ENCODE measurements at regions of chr6 and their contacts with region 1.

Region 1: GRCh38 chr6:42864602-42865001 is 14.8 kb upstream of the RPL7L1 start:
- DNase-seq: no peak
- H3K4me3 ChIP-seq: no peak overlapping the region
- CTCF ChIP-seq: no peak

Region 2: GRCh38 chr6:42661540-42662153 is 203.0 kb before region 1 on chr6:
- in situ Hi-C with region 1: loop called (anchors 25 kb)
- DNase-seq: peak; percentile 45
- H3K4me3 ChIP-seq: no peak overlapping the region
- CTCF ChIP-seq: peak; percentile 82

Region 3: DNA sequence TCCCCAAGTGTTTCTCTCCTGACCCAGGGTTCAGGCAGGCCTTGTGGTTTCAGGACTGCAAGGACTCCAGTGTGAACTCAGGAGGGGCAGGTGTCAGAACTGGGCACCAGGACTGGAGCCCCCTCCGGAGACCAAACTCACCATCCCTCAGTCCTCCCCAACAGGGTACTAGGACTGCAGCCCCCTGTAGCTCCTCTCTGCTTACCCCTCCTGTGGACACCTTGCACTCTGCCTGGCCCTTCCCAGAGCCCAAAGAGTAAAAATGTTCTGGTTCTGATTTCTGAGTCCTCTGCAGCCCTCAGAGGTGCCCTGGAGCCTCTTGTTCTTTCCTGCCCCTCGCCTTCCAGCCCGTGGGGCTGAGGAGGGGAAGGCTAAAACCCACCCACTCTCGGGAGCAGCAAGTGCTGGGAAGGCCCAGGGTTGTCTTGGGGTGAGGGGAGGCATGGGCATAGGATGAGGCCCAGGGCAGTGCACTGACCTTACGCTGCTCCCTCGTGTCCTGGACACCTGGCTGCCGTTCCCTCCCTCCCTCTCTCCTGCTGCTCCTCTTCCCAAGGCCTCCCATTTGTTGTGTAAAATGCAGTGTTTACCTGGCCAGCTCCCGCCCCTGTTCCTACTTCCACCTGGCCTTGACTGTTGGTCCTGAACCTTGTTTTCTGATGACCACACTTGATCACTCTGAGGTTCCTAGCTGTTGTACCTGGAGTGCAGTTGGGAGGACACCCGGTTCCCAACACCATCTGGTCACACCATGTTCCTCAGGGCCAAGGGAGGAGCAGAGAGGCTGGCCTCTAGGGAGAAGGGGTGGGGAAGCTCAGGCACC is 74.6 kb after region 1 on chr6:
- in situ Hi-C with region 1: no loop called
- DNase-seq: no peak
- H3K4me3 ChIP-seq: no peak overlapping the region
- CTCF ChIP-seq: no peak

Measured in astrocyte of the cerebellum (primary cell).